Left cardiac atrium (tissue), 4 donors: ENCODE measurements at regions of chr1 and their contacts with region 1.

Region 1: GRCh38 chr1:183543619-183544204 is 46.5 kb downstream of the NCF2 start:
- DNase-seq: no peak
- ATAC-seq: peak; percentile 83 to 86

Region 2: GRCh38 chr1:183339556-183340167 is 204.1 kb before region 1 on chr1:
- intact Hi-C with region 1: no loop called
- DNase-seq: no peak
- ATAC-seq: no peak

Region 3: DNA sequence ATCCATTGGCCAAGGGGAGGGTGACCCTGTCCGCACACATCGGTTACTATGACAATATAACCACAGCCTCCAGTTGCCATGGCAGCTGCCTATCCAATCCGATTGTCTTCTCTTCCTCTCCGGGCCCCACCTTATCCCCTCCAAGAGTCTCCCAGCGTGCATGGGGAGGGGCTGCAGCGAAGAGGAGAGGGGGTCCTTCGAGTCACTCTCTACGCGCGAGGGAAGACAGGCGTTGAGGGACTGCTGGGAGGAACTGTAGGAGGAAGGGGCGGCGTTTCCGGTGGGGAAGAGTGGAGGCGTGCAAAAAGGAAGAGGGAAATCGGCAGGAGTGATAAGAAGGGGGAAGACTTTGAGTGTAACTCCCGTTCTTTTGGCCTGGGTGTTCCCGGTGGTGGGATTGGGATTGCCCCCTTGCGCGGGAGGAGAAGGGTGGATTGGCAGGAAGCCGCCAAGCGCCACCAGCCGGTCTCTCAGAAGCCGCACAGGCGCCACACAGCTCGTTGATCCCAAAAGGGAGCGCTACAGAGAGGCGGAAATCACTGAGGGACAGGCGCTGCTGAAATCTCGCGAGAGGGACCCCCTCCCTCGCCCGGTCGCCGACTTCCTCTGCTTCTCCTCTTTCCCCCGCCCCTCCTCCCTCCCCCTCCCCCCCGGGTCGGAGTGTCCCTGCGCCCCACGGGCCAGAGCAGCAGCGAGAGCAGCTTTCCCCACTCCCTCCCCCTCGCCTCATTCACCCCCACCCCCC is 71.8 kb before region 1 on chr1:
- intact Hi-C with region 1: loop called in 1 of 2 experiments (anchors 5 kb)
- DNase-seq: peak; percentile 97
- ATAC-seq: peak; percentile 88

Region 4: GRCh38 chr1:183622884-183623785 is 79.4 kb after region 1 on chr1:
- intact Hi-C with region 1: loop called in 1 of 2 experiments (anchors 10 kb)
- DNase-seq: peak; percentile 29
- ATAC-seq: peak; percentile 88 to 93

Region 5: DNA sequence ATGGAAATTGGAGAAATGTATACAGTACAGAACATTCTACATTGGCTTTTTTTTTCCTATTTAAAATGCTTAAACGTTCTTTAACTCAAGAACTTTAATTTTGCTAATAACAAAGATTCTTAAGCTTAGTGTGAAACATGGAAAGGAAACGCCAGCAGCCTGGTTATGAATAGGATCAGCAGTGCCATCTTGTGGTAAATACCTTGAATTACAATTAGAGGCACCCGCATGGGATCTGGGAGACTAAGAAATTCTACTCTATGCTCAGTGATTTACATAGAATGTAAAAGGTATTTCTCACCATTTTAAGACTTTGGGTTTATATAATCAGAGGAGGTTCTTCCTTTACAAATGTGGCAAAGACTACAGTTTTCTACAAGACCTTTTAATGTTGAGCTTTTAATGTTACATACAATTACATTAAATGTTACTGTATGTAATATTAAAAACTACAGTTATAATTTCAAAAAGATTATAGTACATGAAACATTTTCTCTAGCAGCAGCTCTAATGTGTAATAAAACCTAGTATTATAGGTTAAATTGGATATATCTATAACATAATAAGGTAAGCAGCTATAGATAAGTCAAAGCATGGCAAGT is 141.5 kb after region 1 on chr1:
- intact Hi-C with region 1: no loop called
- DNase-seq: no peak
- ATAC-seq: peak in 1 of 2 donors; percentile 70